ENCODE measurements at regions of chr19 and their contacts with region 1.

Region 1: DNA sequence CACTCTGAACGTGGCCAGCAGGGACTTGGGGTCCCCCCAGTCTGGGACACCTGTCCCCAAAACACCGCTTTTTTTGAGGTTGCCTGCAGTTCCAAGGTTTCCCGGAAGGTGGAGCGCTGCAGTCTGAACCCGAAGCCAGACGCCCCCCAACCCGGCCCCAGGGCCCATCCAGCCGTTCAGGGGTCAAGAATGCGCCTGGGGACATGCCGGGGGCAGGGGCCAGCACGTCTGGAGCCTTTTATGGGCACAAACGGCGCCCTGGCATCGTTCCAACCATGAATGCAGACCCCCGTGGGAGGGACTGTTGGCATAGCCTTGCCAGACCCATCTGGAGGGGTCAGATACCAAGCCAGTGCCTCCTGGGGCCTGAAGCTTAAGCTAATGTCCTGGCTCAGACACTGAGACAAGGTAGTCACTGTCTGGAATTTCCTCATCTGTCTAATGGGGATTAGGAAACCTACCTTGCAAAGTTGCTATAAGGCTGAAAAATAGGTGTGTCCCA is 6.9 kb downstream of the S1PR5 start:
- DNase-seq: peak; percentile 81
- ATAC-seq: no peak
- H3K4me3 Mint-ChIP-seq: no peak overlapping the region
- H3K27ac Mint-ChIP-seq: no peak overlapping the region
- H3K4me1 Mint-ChIP-seq: peaks cover 27% of the 10 kb centered on the region
- H3K27me3 Mint-ChIP-seq: peaks cover 45% of the 10 kb centered on the region

Region 2: DNA sequence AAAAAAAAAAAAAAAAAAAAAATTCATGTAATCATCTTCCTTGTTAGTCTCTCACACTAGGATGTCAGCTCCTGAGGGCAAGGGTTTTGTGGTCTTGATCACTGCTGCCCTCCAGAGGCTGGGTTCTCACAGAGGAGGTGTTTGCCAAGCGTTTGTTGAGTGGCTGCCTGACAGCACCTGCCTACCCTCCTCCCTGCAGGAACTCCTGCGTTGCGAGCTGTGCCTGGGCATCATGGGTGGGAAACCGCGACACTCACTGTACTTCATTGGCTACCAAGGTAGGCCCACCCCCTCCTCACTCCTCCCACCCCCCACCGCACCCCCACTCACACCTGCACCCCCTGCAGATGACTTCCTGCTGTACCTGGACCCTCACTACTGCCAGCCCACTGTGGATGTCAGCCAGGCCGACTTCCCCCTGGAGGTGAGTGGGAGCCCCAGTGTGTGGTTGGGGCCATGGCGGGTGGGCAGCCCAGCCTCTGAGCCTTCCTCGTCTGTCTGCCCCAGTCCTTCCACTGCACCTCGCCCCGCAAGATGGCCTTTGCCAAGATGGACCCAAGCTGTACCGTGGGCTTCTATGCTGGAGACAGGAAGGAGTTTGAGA is 41.4 kb after region 1 on chr19:
- POLR2A ChIA-PET with region 1: interaction called, 19 read pairs
- DNase-seq: no peak
- ATAC-seq: no peak
- H3K4me3 Mint-ChIP-seq: peak overlapping the region; percentile 47
- H3K27ac Mint-ChIP-seq: peak overlapping the region; percentile 92
- H3K4me1 Mint-ChIP-seq: peaks cover 44% of the 10 kb centered on the region
- H3K27me3 Mint-ChIP-seq: no peaks in the 10 kb centered on the region

Measured in activated naive CD8-positive, alpha-beta T cell treated with anti-CD3 and anti-CD28 coated beads, Interleukin-2, amount 10 ng/mL, durations not matched to agents 7 days and 5 days (primary cell).